ENCODE measurements at regions of chr1 and their contacts with region 1.

Region 1: DNA sequence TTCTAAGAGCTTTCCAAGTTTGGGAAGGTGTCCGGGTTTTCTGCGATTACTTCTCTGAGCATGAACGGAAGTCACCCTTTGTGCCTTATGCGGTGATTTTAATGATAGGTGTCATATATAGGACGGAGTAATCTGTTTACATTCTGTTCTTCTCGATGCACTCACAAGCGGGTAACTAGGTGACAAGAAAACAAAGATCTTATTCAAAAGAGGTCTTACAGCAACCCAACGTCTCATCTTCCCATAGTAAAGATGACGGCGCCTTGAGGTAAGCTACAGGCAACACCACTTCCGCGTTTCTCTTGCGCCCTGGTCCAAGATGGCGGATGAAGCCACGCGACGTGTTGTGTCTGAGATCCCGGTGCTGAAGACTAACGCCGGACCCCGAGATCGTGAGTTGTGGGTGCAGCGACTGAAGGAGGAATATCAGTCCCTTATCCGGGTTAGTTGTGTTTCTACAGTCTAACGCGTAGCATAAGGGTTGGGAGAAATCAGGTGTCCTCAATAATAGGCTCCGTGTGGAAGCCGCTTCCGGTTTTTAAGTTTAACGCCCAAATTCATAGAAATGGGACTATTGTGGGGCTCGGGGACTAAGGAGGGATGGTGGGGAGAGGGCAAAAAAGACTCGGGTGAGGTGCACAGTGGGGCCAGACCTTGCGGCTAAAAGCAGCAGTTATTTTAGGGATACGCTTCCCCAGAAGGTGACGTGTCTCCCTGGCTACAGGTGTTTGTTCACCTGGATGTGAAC is at the start of gene UFC1:
- DNase-seq: peak in 1 of 2 experiments; percentile 80
- H3K4me3 ChIP-seq: peak within 1 kb of the TSS; percentile 91 to 99 (median 96)
- H3K27ac ChIP-seq: peak within 1 kb of the TSS; percentile 98
- H3K4me1 ChIP-seq: peaks cover 0 to 7% (median under 1%) of the 10 kb centered on the region in 4 experiments; a peak in 3 of 7 replicates
- H3K27me3 ChIP-seq: no peaks in the 10 kb centered on the region
- CTCF ChIP-seq: no peak
- EP300 ChIP-seq: 0 out of 3 replicates have a peak, but pooled peaks of 1 of the 2 experiments have one; percentile 2
- POLR2A ChIP-seq: peak; percentile 84 to 94
- RAD21 ChIP-seq: no peak
- total RNA-seq, gene UFC1: 67.8 and 71.0 TPM in 2 replicates

Region 2: DNA sequence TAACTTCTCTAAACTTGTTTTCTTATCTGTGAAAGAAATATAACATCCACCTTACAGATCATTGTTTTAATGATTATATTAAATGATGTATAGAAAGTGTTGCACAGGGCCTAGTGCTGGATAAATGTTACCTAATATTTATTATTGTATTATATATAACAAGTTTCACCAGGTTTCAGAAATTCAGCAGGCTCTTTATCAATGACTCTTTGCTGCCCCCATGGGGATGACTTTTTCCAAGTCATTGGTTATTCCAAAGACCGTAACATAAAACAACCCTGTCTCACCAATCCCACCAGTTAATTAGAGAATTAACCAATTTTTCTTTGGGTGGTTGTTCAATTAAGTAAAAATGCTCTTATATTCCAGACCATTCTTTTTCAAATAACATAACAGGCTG is 14.1 kb before region 1 on chr1:
- CTCF ChIA-PET with region 1: interaction called, 11 read pairs
- POLR2A ChIA-PET with region 1: interaction called, 130 read pairs
- DNase-seq: no peak
- H3K4me3 ChIP-seq: no peak overlapping the region
- H3K27ac ChIP-seq: no peak overlapping the region
- H3K4me1 ChIP-seq: no peaks in the 10 kb centered on the region
- H3K27me3 ChIP-seq: no peaks in the 10 kb centered on the region
- CTCF ChIP-seq: peak in 2 of 3 experiments; percentile 24 to 43; a peak in 2 of 4 replicates
- EP300 ChIP-seq: no peak
- POLR2A ChIP-seq: no peak
- RAD21 ChIP-seq: peak; percentile 60 to 68